Ovary (tissue), 10 donors: ENCODE measurements at regions of chr7 and their contacts with region 1.

Region 1: GRCh38 chr7:89731751-89732445 is 422.4 kb upstream of the STEAP1 start:
- DNase-seq: no peak
- H3K4me3 ChIP-seq: no peak overlapping the region
- H3K27ac ChIP-seq: no peak overlapping the region
- H3K4me1 ChIP-seq: no peaks in the 10 kb centered on the region
- H3K27me3 ChIP-seq: no peaks in the 10 kb centered on the region
- CTCF ChIP-seq: no peak
- EP300 ChIP-seq: no peak
- POLR2A ChIP-seq: no peak

Region 2: DNA sequence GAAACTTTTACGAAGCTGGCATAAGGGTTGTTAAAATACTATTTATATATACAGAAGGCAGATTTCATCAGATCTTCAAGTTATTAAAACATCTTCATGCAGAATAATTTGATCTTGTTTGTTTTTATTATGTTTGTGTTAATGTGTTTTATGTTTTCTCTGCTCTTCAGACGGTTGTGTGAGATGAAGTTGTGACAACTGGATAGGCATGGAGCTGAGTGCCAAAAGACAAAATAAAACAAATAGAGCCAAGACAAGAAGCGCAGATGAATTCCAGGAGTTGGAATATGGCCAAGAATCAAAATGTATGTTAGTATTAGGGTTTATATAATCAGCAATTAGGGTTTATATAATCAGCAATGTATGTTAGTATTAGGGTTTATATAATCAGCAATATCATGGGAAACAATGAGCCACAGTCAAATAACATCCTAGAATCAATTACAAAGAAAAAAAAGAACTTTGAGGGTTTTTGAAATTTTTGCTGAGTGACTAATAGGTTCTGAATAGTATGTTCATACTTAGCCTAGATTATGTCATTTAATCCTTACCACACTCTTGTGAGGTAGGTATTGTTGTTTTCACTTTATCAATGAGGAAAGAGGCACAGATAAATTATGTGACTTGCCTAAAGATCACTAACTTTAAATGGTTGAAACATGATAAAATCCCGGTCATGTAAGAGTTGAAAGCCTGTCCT is 65.6 kb before region 1 on chr7:
- intact Hi-C with region 1: no loop called
- DNase-seq: no peak
- H3K4me3 ChIP-seq: no peak overlapping the region
- H3K27ac ChIP-seq: no peak overlapping the region
- H3K4me1 ChIP-seq: no peaks in the 10 kb centered on the region
- H3K27me3 ChIP-seq: no peaks in the 10 kb centered on the region
- CTCF ChIP-seq: no peak
- EP300 ChIP-seq: no peak
- POLR2A ChIP-seq: no peak

Region 3: GRCh38 chr7:89681448-89681847 is 50.5 kb before region 1 on chr7:
- intact Hi-C with region 1: loop called in 1 of 4 experiments (anchors 5 kb)
- DNase-seq: no peak
- H3K4me3 ChIP-seq: no peak overlapping the region
- H3K27ac ChIP-seq: no peak overlapping the region
- H3K4me1 ChIP-seq: no peaks in the 10 kb centered on the region
- H3K27me3 ChIP-seq: no peaks in the 10 kb centered on the region
- CTCF ChIP-seq: no peak
- EP300 ChIP-seq: no peak
- POLR2A ChIP-seq: no peak